ENCODE measurements at regions of chr5 and their contacts with region 1.

Region 1: GRCh38 chr5:23284656-23285055 is 222.8 kb upstream of the PRDM9 start:
- DNase-seq: no peak
- H3K4me3 ChIP-seq: no peak overlapping the region
- H3K27ac ChIP-seq: no peak overlapping the region
- H3K4me1 ChIP-seq: no peaks in the 10 kb centered on the region
- H3K27me3 ChIP-seq: no peaks in the 10 kb centered on the region
- CTCF ChIP-seq: no peak
- EP300 ChIP-seq: no peak
- POLR2A ChIP-seq: no peak

Region 2: GRCh38 chr5:23332650-23333251 is 48.1 kb after region 1 on chr5:
- intact Hi-C with region 1: loop called in 1 of 4 experiments (anchors 1 kb)
- DNase-seq: no peak
- H3K4me3 ChIP-seq: no peak overlapping the region
- H3K27ac ChIP-seq: no peak overlapping the region
- H3K4me1 ChIP-seq: no peaks in the 10 kb centered on the region
- H3K27me3 ChIP-seq: no peaks in the 10 kb centered on the region
- CTCF ChIP-seq: no peak
- EP300 ChIP-seq: no peak
- POLR2A ChIP-seq: no peak

Measured in ovary (tissue), 10 donors.